T-cell (primary cell): ENCODE measurements at regions of chr11 and their contacts with region 1.

Region 1: GRCh38 chr11:126755526-126755925 is 245.0 kb downstream of the KIRREL3 start:
- DNase-seq: no peak
- ATAC-seq: no peak
- H3K4me3 ChIP-seq: no peak overlapping the region
- H3K4me3 Mint-ChIP-seq: no peak overlapping the region
- H3K27ac ChIP-seq: no peak overlapping the region
- H3K27ac Mint-ChIP-seq: no peak overlapping the region
- H3K4me1 ChIP-seq: no peaks in the 10 kb centered on the region
- H3K4me1 Mint-ChIP-seq: no peaks in the 10 kb centered on the region
- H3K27me3 ChIP-seq: no peaks in the 10 kb centered on the region
- H3K27me3 Mint-ChIP-seq: peaks cover 5 to 30% of the 10 kb centered on the region in 2 donors

Region 2: GRCh38 chr11:126739499-126740145 is 15.9 kb before region 1 on chr11:
- CTCF ChIA-PET with region 1: no interaction called
- POLR2A ChIA-PET with region 1: no interaction called
- DNase-seq: no peak
- ATAC-seq: no peak
- H3K4me3 ChIP-seq: no peak overlapping the region
- H3K4me3 Mint-ChIP-seq: no peak overlapping the region
- H3K27ac ChIP-seq: no peak overlapping the region
- H3K27ac Mint-ChIP-seq: peak overlapping the region in 1 of 2 donors; percentile 45
- H3K4me1 ChIP-seq: no peaks in the 10 kb centered on the region
- H3K4me1 Mint-ChIP-seq: peaks cover 0 to 24% (median 0%) of the 10 kb centered on the region in 3 donors
- H3K27me3 ChIP-seq: peaks cover 0 to 10% of the 10 kb centered on the region in 2 experiments
- H3K27me3 Mint-ChIP-seq: peaks cover 0 to 16% of the 10 kb centered on the region in 2 donors

Region 3: DNA sequence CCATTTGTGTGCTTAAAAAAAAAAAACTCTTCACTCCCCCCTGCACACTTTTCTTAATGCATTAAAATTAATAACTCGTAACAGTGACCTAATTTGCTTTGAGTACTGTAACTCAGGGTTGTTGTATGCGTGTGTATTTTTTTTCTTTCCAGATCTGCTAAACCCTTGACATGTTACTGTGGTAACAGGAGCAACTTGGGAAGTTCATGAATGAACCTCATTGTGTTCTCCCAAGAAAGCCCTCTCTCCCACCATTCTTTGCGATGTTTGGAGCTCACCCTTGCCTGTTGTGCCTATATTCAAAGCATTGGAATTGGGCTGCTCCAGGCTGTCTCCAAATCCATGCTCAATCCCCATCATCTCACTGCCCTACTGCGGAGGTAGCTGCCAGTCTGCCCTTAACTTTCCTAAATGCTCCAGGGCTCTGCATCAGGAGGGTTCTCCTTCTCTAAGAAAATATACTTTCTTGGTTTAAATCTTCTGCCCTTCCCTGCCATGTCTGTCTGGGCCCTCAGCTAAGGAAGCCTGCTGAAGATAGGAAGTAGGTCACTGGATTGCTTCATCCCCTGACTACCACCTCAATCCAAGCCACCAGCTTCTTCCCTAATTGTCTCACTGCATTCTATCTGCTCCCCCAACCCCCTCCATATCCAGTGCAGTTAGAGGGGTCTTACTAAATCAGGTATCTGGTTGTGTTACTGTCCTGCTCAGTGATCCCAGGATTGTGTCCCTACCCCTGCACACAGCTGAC is 174.7 kb after region 1 on chr11:
- CTCF ChIA-PET with region 1: no interaction called
- POLR2A ChIA-PET with region 1: interaction called in 1 of 2 experiments, 10 read pairs
- DNase-seq: no peak
- ATAC-seq: no peak
- H3K4me3 ChIP-seq: no peak overlapping the region
- H3K4me3 Mint-ChIP-seq: no peak overlapping the region
- H3K27ac ChIP-seq: no peak overlapping the region
- H3K27ac Mint-ChIP-seq: no peak overlapping the region
- H3K4me1 ChIP-seq: no peaks in the 10 kb centered on the region
- H3K4me1 Mint-ChIP-seq: no peaks in the 10 kb centered on the region
- H3K27me3 ChIP-seq: peaks cover 0 to 13% of the 10 kb centered on the region in 2 experiments
- H3K27me3 Mint-ChIP-seq: peaks cover 10 to 16% of the 10 kb centered on the region in 2 donors